ENCODE measurements at regions of chr12 and their contacts with region 1.

Region 1: DNA sequence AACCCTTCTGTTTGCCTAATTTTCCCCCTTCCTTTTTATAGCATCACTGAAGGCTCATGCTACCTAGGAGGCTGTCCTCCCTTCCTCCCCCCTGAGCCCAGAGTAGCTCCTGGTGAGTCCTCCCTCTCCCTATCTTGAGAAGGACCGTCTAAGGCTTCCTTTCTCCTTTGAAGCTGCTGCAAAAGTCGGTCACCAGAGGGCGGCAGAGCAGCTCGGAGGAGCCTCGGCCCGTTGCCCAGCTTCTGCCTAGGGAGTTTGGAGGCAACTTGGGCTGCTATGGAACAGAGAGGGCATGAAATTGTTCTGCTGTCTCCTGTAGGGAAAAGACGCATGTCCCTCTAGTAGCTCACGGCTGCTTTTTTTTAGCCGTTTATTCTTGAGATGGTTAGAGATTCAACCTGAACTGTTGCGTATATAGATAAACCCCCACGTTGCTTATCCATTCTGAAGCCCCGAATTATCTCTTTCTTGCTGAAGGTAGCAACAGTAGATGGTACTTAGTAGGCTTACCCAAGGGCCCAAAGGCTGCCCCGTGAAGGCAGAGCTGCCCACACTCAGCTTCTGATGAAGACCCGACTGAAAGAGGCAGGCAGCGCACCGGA is 5.7 kb downstream of the WNT5B start:
- DNase-seq: peak; percentile 16 to 72 (median 48)
- ATAC-seq: peak; percentile 53 to 76 (median 56)
- H3K4me3 ChIP-seq: no peak overlapping the region
- H3K4me3 Mint-ChIP-seq: no peak overlapping the region
- H3K27ac ChIP-seq: no peak overlapping the region
- H3K27ac Mint-ChIP-seq: peak overlapping the region in 1 of 2 donors; percentile 69
- H3K4me1 ChIP-seq: peaks cover 2 to 15% of the 10 kb centered on the region in 2 experiments
- H3K4me1 Mint-ChIP-seq: peaks cover 7 to 17% (median 9%) of the 10 kb centered on the region in 3 donors
- H3K27me3 ChIP-seq: peaks cover 3 to 51% of the 10 kb centered on the region in 2 experiments
- H3K27me3 Mint-ChIP-seq: peaks cover 41 to 42% of the 10 kb centered on the region in 2 donors

Region 2: DNA sequence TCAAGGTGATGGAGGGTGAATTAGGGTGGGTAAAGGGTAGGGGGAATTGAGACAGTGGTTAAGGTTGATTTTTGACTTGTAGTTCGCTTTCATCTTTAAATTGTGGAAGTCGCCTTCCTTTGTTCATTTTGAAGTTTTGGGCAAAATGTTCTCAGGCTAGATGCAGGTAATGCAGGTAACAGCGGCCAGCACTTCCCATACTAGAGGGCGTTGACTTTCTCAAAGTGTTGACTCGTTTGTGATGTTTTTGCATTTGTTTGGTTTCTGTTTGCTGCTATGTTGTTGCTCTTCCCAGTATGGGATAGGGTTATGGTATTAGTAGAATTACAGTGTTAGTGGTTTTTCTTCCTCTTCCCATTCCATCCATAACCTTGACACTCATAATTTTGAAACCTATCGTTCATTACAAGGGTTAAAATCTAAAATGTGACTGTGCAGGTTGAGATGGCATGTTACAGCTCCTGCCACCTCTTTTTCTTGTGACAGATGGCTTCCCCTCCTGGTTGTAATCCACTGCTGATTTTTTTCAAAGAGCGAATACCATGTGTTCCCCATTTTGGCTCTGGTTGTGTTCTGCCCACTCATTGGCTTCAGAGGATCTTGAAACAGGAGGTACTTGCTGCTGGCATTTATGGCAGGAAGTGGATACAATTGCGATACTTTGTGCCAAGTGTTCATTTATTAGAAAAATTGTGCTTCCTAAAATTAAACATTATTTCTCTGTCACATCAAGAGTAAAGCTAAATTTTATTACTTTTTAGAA is 586.6 kb before region 1 on chr12:
- CTCF ChIA-PET with region 1: no interaction called
- POLR2A ChIA-PET with region 1: no interaction called
- DNase-seq: peak in 2 of 35 experiments; percentile 0 to 3
- ATAC-seq: no peak
- H3K4me3 ChIP-seq: no peak overlapping the region
- H3K4me3 Mint-ChIP-seq: peak overlapping the region in 2 of 3 donors; percentile 8 to 42
- H3K27ac ChIP-seq: no peak overlapping the region
- H3K27ac Mint-ChIP-seq: no peak overlapping the region
- H3K4me1 ChIP-seq: peaks cover 0 to 3% of the 10 kb centered on the region in 2 experiments
- H3K4me1 Mint-ChIP-seq: peaks cover 13 to 24% (median 22%) of the 10 kb centered on the region in 3 donors
- H3K27me3 ChIP-seq: no peaks in the 10 kb centered on the region
- H3K27me3 Mint-ChIP-seq: no peaks in the 10 kb centered on the region

Region 3: DNA sequence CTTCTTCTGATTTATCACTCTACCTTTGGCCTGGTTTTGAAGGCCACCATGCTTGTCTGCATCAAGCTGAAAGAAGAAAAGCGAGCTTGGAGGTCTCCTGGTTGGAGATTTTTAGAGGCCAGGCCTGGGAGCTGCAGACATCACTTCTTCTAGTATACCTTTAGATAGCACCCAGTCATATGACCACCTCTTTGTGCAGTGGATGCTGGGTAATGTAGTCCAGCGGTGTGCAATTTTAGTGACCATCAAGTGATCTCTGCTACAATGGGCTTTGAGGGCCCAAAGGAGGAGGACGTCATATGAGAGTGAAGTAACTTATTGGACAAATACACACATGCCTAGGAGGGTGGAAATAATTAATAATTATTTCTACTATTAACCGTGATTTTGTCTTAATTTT is 20.8 kb before region 1 on chr12:
- CTCF ChIA-PET with region 1: no interaction called
- POLR2A ChIA-PET with region 1: no interaction called
- DNase-seq: no peak
- ATAC-seq: no peak
- H3K4me3 ChIP-seq: no peak overlapping the region
- H3K4me3 Mint-ChIP-seq: no peak overlapping the region
- H3K27ac ChIP-seq: no peak overlapping the region
- H3K27ac Mint-ChIP-seq: no peak overlapping the region
- H3K4me1 ChIP-seq: no peaks in the 10 kb centered on the region
- H3K4me1 Mint-ChIP-seq: peaks cover 3 to 11% (median 9%) of the 10 kb centered on the region in 3 donors
- H3K27me3 ChIP-seq: peaks cover 0 to 10% of the 10 kb centered on the region in 2 experiments
- H3K27me3 Mint-ChIP-seq: peaks cover 0 to 4% of the 10 kb centered on the region in 2 donors

Region 4: DNA sequence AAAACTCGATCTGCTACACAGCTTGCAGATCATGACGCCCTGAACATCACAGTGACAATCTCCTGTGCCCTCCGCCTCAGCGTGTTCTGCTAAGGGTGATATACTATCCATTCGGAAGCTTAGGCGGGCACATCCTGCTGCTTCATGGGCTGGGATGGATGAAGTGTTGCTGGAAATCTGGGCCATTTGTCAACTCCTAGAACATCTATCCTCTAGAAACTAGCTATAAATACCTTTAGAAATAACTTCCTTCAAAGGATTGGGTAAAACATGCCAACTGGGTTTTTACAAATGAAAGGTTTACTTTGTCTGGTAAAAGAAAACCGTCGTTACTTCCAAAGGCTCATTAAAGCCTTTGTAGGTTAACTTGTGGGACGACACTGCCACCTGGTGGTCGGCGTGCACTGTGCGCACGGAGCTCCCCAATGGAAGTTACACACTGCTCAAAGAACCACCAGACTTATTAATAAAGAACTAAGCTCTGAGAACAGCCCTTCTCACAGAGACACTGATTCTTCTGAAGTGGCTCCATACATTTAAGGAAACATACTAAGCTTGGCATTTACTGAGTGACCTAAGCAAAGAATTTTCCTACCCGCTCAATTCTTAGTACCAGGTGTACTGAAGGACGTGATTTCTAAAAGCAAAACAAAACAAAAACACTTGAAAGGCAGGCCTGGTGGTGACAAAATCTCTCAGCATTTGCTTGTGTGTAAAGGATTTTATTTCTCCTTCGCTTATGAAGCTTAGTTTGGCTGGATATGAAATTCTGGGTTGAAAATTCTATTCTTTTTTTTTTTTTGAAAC is 305.3 kb after region 1 on chr12:
- CTCF ChIA-PET with region 1: interaction called in 1 of 2 experiments, 20 read pairs
- POLR2A ChIA-PET with region 1: no interaction called
- DNase-seq: peak; percentile 70 to 93 (median 88)
- ATAC-seq: peak; percentile 86 to 100 (median 97)
- H3K4me3 ChIP-seq: no peak overlapping the region
- H3K4me3 Mint-ChIP-seq: no peak overlapping the region
- H3K27ac ChIP-seq: no peak overlapping the region
- H3K27ac Mint-ChIP-seq: peak overlapping the region in 1 of 2 donors; percentile 29
- H3K4me1 ChIP-seq: peaks cover 0 to 4% of the 10 kb centered on the region in 2 experiments
- H3K4me1 Mint-ChIP-seq: peaks cover 4 to 5% (median 5%) of the 10 kb centered on the region in 3 donors
- H3K27me3 ChIP-seq: no peaks in the 10 kb centered on the region
- H3K27me3 Mint-ChIP-seq: no peaks in the 10 kb centered on the region